GM13977 (cell line): ENCODE measurements at regions of chrX and their contacts with region 1.

Region 1: GRCh38 chrX:40651620-40652223 is 4.4 kb upstream of the CXorf38 start:
- DNase-seq: peak; percentile 46
- CTCF ChIP-seq: peak; percentile 73

Region 2: GRCh38 chrX:40366661-40367060 is 285.1 kb before region 1 on chrX:
- in situ Hi-C with region 1: no loop called
- DNase-seq: no peak
- CTCF ChIP-seq: no peak

Region 3: GRCh38 chrX:40784516-40785151 is 132.9 kb after region 1 on chrX:
- in situ Hi-C with region 1: loop called (anchors 10 kb)
- DNase-seq: no peak
- CTCF ChIP-seq: no peak

Region 4: GRCh38 chrX:41145920-41146608 is 494.3 kb after region 1 on chrX:
- in situ Hi-C with region 1: loop called (anchors 25 kb)
- DNase-seq: no peak
- CTCF ChIP-seq: no peak

Region 5: GRCh38 chrX:41491267-41492004 is 839.7 kb after region 1 on chrX:
- in situ Hi-C with region 1: no loop called
- DNase-seq: no peak
- CTCF ChIP-seq: no peak